IMR-90 (cell line): ENCODE measurements at regions of chr3 and their contacts with region 1.

Region 1: GRCh38 chr3:60363817-60364216 is 887.4 kb downstream of the FHIT start:
- DNase-seq: peak; percentile 72
- ATAC-seq: peak; percentile 91
- H3K4me3 ChIP-seq: no peak overlapping the region
- H3K27ac ChIP-seq: no peak overlapping the region
- H3K4me1 ChIP-seq: peaks cover 5% of the 10 kb centered on the region
- H3K27me3 ChIP-seq: peaks cover 14% of the 10 kb centered on the region
- CTCF ChIP-seq: no peak
- POLR2A ChIP-seq: no peak
- RAD21 ChIP-seq: no peak

Region 2: DNA sequence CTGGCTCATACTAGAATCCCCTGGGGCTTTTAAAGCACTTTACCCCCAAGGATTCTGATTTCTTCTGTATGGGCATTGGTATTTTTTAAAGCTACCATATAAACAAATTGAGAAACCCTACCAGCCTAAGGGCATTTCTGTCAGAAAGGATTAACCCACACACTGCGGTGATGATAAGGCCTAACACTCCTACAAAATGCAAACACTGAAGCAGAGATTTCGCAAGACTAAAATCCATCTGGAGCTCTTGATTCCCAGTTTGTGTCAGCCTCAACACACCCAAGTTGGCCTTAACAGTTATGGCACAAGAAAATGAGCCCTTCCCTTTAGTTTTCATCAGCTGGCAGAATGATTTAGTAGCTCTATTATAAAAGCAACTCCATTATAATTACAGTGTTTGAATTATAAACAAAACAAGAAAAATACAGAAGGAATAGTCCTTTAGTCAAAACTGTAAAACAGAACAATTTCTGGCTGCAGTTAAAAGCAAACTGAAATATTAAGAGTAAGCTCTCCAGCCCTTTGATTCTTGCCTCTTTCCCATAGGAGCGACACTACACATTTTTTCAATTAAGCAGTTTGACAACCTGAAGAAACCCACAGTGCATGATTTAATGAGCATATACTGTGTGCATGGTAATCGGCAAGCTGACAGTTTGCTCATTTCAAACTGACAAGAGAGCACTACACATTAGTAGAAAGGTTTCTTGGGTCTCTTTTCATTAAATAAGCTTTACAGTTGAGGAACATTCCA is 446.2 kb after region 1 on chr3:
- CTCF ChIA-PET with region 1: no interaction called
- POLR2A ChIA-PET with region 1: no interaction called
- dilution Hi-C with region 1: no loop called
- in situ Hi-C with region 1: no loop called
- intact Hi-C with region 1: no loop called
- DNase-seq: no peak
- ATAC-seq: peak; percentile 29; the same call in 1 of the 2 replicates
- H3K4me3 ChIP-seq: no peak overlapping the region
- H3K27ac ChIP-seq: no peak overlapping the region
- H3K4me1 ChIP-seq: no peaks in the 10 kb centered on the region
- H3K27me3 ChIP-seq: no peaks in the 10 kb centered on the region
- CTCF ChIP-seq: no peak
- POLR2A ChIP-seq: no peak
- RAD21 ChIP-seq: no peak

Region 3: GRCh38 chr3:61268644-61269043 is 904.8 kb after region 1 on chr3:
- CTCF ChIA-PET with region 1: no interaction called
- POLR2A ChIA-PET with region 1: no interaction called
- dilution Hi-C with region 1: no loop called
- in situ Hi-C with region 1: no loop called
- intact Hi-C with region 1: loop called (anchors 2 kb)
- DNase-seq: no peak
- ATAC-seq: no peak
- H3K4me3 ChIP-seq: no peak overlapping the region
- H3K27ac ChIP-seq: no peak overlapping the region
- H3K4me1 ChIP-seq: no peaks in the 10 kb centered on the region
- H3K27me3 ChIP-seq: no peaks in the 10 kb centered on the region
- CTCF ChIP-seq: no peak
- POLR2A ChIP-seq: no peak
- RAD21 ChIP-seq: no peak